ENCODE measurements at regions of chr2 and their contacts with region 1.

Region 1: DNA sequence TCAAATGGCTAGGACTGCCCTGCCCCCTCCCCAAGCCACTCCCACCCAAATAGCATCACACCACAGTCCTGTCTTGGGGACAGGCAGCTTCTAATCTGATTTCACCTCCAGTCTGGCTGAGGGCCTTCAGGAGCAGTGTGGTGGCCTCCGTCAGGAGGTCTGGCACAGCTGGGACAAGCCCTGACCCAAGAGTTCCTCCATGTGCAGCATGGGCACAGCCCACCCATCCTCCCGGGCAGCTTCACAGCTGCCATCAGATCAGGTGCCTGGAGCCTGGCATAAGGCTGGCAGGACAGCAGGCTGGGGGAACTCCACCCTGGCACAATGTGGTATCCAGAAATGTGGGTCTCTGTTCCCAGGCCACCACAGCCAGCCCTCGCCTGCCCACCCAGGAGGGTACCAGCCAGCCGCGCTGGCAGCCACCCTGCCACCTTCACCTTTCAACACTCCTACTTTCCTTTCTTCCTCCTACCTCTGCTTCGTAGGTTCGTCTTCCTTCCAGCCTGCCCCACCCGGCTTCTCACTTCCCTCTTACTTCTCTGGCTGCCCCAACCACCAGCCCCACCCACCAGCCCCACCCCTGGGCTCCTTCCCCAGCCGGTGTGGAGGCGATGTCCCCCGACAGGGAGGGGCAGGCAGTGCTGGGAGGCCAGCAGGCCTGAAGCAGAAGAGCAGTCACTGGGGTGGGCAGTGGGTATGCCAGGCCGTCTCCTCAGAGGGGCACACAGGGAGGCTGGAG is at the start of gene CAPG:
- DNase-seq: peak; percentile 45
- H3K4me3 Mint-ChIP-seq: peak within 1 kb of the TSS; percentile 39
- H3K27ac Mint-ChIP-seq: no peak within 1 kb of the TSS
- H3K4me1 Mint-ChIP-seq: peaks cover 46% of the 10 kb centered on the region
- H3K27me3 Mint-ChIP-seq: peaks cover 10% of the 10 kb centered on the region
- total RNA-seq, gene CAPG: 10.2 to 10.7 TPM

Region 2: DNA sequence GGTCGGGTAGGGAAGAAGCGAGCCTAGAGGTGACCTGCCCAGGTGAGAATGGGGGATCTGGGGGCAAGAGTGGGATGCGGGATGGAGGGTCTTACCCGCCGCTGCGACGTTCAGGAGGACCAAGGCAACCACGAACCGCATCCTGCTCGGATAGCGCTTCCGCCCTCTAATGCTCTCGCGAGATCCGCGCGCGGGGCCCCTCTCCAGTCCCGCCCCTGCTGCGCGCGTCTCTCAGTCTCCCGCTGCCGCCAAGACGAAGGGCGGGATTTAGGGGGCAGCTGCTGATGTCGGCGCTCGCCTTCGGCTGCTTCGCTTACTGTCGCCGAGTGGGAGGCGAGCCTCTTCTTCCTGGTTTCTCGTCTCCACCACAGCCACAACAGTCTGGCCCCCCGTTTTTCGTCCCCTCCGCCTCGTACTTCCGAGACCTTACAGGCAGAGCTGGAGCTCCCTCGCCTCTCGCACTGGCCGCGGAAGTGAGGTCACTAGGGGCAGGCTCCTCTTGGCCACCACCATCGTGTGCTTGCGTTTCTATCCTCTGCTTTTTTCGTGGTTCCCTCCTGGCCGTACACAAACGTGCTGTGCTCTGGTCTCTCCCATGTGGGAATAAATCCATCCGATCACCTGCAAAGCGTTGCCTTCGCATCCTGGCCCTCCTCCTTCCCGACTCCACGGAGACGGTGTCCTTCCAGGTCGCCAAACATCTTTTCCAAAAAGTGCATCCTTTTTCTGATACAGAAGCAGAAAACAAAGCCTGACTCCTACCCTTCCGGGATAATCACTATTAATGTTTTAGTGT is 82.0 kb before region 1 on chr2 and contains the start of gene TGOLN2:
- CTCF ChIA-PET with region 1: no interaction called
- intact Hi-C with region 1: loop called (anchors 5 kb)
- DNase-seq: peak; percentile 95
- H3K4me3 Mint-ChIP-seq: peak within 1 kb of the TSS; percentile 99
- H3K27ac Mint-ChIP-seq: peak within 1 kb of the TSS; percentile 99
- H3K4me1 Mint-ChIP-seq: peaks cover 25% of the 10 kb centered on the region
- H3K27me3 Mint-ChIP-seq: no peaks in the 10 kb centered on the region
- total RNA-seq, gene TGOLN2: 82.5 to 85.4 TPM

Region 3: GRCh38 chr2:85551698-85552678 is 142.0 kb after region 1 on chr2:
- CTCF ChIA-PET with region 1: interaction called, 12 read pairs
- intact Hi-C with region 1: no loop called
- DNase-seq: peak; percentile 95
- H3K4me3 Mint-ChIP-seq: no peak overlapping the region
- H3K27ac Mint-ChIP-seq: no peak overlapping the region
- H3K4me1 Mint-ChIP-seq: peaks cover 2% of the 10 kb centered on the region
- H3K27me3 Mint-ChIP-seq: no peaks in the 10 kb centered on the region